K562 (cell line): ENCODE measurements at regions of chr9 and their contacts with region 1.

Region 1: GRCh38 chr9:129884220-129885017 is 49.2 kb downstream of the USP20 start:
- DNase-seq: peak; percentile 95 to 100 (median 96)
- ATAC-seq: peak; percentile 82
- H3K4me3 ChIP-seq: peak overlapping the region; percentile 48
- H3K27ac ChIP-seq: peak overlapping the region; percentile 91
- H3K4me1 ChIP-seq: peaks cover 50 to 53% of the 10 kb centered on the region in 2 experiments
- H3K27me3 ChIP-seq: no peaks in the 10 kb centered on the region; a peak in 1 of 5 replicates
- CTCF ChIP-seq: peak in 1 of 3 experiments; percentile 58; a peak in 3 of 6 replicates
- EP300 ChIP-seq: peak; percentile 52; the same call in 1 of the 2 replicates
- POLR2A ChIP-seq: no peak
- RAD21 ChIP-seq: peak in 1 of 2 experiments; percentile 21; a peak in 1 of 4 replicates

Region 2: GRCh38 chr9:128296337-128297220 is 1587.8 kb before region 1 on chr9:
- CTCF ChIA-PET with region 1: interaction called, 4 read pairs
- POLR2A ChIA-PET with region 1: interaction called, 3 read pairs
- in situ Hi-C with region 1: no loop called
- intact Hi-C with region 1: loop called (anchors 1 kb)
- DNase-seq: peak; percentile 85 to 97 (median 90)
- ATAC-seq: peak; percentile 73
- H3K4me3 ChIP-seq: no peak overlapping the region
- H3K27ac ChIP-seq: peak overlapping the region; percentile 49
- H3K4me1 ChIP-seq: peaks cover 38 to 42% of the 10 kb centered on the region in 2 experiments
- H3K27me3 ChIP-seq: no peaks in the 10 kb centered on the region
- CTCF ChIP-seq: peak in 1 of 3 experiments; percentile 13; a peak in 1 of 6 replicates
- EP300 ChIP-seq: peak; percentile 69
- POLR2A ChIP-seq: no peak
- RAD21 ChIP-seq: peak; percentile 4 to 36; a peak in 1 of 4 replicates

Region 3: GRCh38 chr9:129641746-129642513 is 242.5 kb before region 1 on chr9 and contains the start of gene ASB6:
- CTCF ChIA-PET with region 1: no interaction called
- POLR2A ChIA-PET with region 1: no interaction called
- in situ Hi-C with region 1: no loop called
- intact Hi-C with region 1: loop called (anchors 10 kb)
- DNase-seq: peak; percentile 98 to 99 (median 98)
- ATAC-seq: peak; percentile 100
- H3K4me3 ChIP-seq: peak within 1 kb of the TSS; percentile 99
- H3K27ac ChIP-seq: peak within 1 kb of the TSS; percentile 74
- H3K4me1 ChIP-seq: peaks cover 0 to 37% of the 10 kb centered on the region in 2 experiments; a peak in 3 of 5 replicates
- H3K27me3 ChIP-seq: no peaks in the 10 kb centered on the region
- CTCF ChIP-seq: peak; percentile 92 to 98 (median 98)
- EP300 ChIP-seq: peak; percentile 50
- POLR2A ChIP-seq: peak; percentile 68; the same call in 1 of the 2 replicates
- RAD21 ChIP-seq: peak; percentile 96 to 97
- polyA plus RNA-seq, gene ASB6: 0.92 to 1.1 TPM

Region 4: GRCh38 chr9:129835021-129835871 is 49.2 kb before region 1 on chr9 and contains the starts of genes C9orf78 and USP20:
- CTCF ChIA-PET with region 1: no interaction called
- POLR2A ChIA-PET with region 1: interaction called, 4 read pairs
- in situ Hi-C with region 1: no loop called
- intact Hi-C with region 1: loop called (anchors 2 kb)
- DNase-seq: peak; percentile 100
- ATAC-seq: peak; percentile 95
- H3K4me3 ChIP-seq: peak within 1 kb of the TSS; percentile 90
- H3K27ac ChIP-seq: peak within 1 kb of the TSS; percentile 80
- H3K4me1 ChIP-seq: peaks cover 45 to 48% of the 10 kb centered on the region in 2 experiments
- H3K27me3 ChIP-seq: no peaks in the 10 kb centered on the region
- CTCF ChIP-seq: peak in 1 of 3 experiments; percentile 9; a peak in 2 of 6 replicates
- EP300 ChIP-seq: peak; percentile 21; the same call in 1 of the 2 replicates
- POLR2A ChIP-seq: peak; percentile 95
- RAD21 ChIP-seq: 0 out of 4 replicates have a peak, but pooled peaks of 1 of the 2 experiments have one; percentile 10
- polyA plus RNA-seq, gene C9orf78: 132 to 266 TPM
- polyA plus RNA-seq, gene USP20: 1.9 to 3.2 TPM

Region 5: DNA sequence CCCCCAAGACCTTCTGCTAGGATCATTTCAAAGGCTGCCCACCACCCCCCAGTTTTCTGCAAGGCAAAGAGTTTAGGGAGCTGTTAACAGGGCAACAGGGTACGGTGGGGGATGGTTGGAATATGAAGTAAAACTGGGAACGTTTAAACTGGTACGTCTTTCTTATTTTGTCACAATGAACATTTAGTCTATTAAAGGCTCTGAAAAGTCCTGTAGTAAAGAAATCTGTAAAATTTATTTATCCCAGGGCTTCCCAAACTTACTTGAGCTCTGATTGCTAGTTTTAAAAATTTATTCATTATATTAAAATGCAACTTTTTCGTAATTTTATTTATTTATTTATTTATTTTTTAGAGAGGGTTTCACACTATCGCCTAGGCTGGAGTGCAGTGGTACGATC is 12.8 kb after region 1 on chr9:
- CTCF ChIA-PET with region 1: no interaction called
- POLR2A ChIA-PET with region 1: interaction called, 10 read pairs
- in situ Hi-C with region 1: no loop called
- intact Hi-C with region 1: no loop called
- DNase-seq: no peak
- ATAC-seq: no peak
- H3K4me3 ChIP-seq: no peak overlapping the region
- H3K27ac ChIP-seq: no peak overlapping the region
- H3K4me1 ChIP-seq: peaks cover 6 to 14% of the 10 kb centered on the region in 2 experiments
- H3K27me3 ChIP-seq: no peaks in the 10 kb centered on the region
- CTCF ChIP-seq: no peak
- EP300 ChIP-seq: no peak
- POLR2A ChIP-seq: no peak
- RAD21 ChIP-seq: no peak

Region 6: GRCh38 chr9:130053504-130054324 is 169.3 kb after region 1 on chr9 and contains the start of gene GPR107:
- CTCF ChIA-PET with region 1: interaction called, 5 read pairs
- POLR2A ChIA-PET with region 1: interaction called, 9 read pairs
- in situ Hi-C with region 1: no loop called
- intact Hi-C with region 1: loop called (anchors 5 kb)
- DNase-seq: peak; percentile 87 to 93 (median 91)
- ATAC-seq: peak; percentile 97
- H3K4me3 ChIP-seq: peak within 1 kb of the TSS; percentile 99
- H3K27ac ChIP-seq: peak within 1 kb of the TSS; percentile 86
- H3K4me1 ChIP-seq: peaks cover 9 to 28% of the 10 kb centered on the region in 2 experiments; a peak in 4 of 5 replicates
- H3K27me3 ChIP-seq: no peaks in the 10 kb centered on the region
- CTCF ChIP-seq: no peak
- EP300 ChIP-seq: no peak; the same call in 1 of the 2 replicates
- POLR2A ChIP-seq: peak; percentile 89
- RAD21 ChIP-seq: 0 out of 4 replicates have a peak, but pooled peaks of 1 of the 2 experiments have one; percentile 7
- polyA plus RNA-seq, gene GPR107: 3.2 to 3.5 TPM

Region 7: DNA sequence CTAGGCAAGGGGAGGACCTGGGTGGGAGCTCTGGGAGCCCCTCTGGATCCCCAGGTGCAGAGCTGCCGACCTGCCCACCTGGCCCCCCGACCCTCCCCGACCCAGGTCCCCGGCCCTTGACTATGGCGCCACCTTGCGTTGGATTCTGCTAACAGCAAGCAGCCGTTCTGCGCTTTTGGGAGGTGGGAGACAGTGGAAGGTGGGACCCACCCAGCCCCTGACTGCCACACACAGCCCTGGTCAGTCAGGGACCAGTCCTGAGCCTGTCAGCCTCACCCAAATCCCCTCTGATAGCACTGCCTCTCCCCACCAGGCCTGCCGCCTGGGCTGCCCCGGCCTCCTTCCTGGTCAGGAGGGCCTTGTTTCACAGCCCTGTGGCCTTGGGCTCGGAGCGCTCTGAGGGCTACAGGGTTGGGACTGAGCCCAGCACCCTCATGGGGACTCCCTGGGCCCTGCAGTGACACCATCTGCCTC is 459.1 kb after region 1 on chr9:
- CTCF ChIA-PET with region 1: interaction called, 3 read pairs
- POLR2A ChIA-PET with region 1: interaction called, 3 read pairs
- in situ Hi-C with region 1: no loop called
- intact Hi-C with region 1: loop called (anchors 10 kb)
- DNase-seq: peak; percentile 49 to 78 (median 64)
- ATAC-seq: peak; percentile 76
- H3K4me3 ChIP-seq: no peak overlapping the region
- H3K27ac ChIP-seq: no peak overlapping the region
- H3K4me1 ChIP-seq: peaks cover 0 to 38% of the 10 kb centered on the region in 2 experiments; a peak in 2 of 5 replicates
- H3K27me3 ChIP-seq: peaks cover 0 to 23% of the 10 kb centered on the region in 2 experiments; a peak in 3 of 5 replicates
- CTCF ChIP-seq: peak; percentile 71 to 82 (median 81)
- EP300 ChIP-seq: no peak
- POLR2A ChIP-seq: no peak
- RAD21 ChIP-seq: peak; percentile 65 to 74